ENCODE measurements at regions of chr14 and their contacts with region 1.

Region 1: GRCh38 chr14:63543000-63543825 is at the start of gene PPP2R5E:
- DNase-seq: peak; percentile 97
- H3K4me3 ChIP-seq: peak within 1 kb of the TSS; percentile 89
- H3K27ac ChIP-seq: peak within 1 kb of the TSS; percentile 77
- H3K27me3 ChIP-seq: no peaks in the 10 kb centered on the region
- CTCF ChIP-seq: no peak
- polyA plus RNA-seq, gene PPP2R5E: 18.2 and 20.3 TPM in 2 replicates

Region 2: GRCh38 chr14:63483315-63483714 is 59.9 kb before region 1 on chr14:
- CTCF ChIA-PET with region 1: no interaction called
- POLR2A ChIA-PET with region 1: no interaction called
- DNase-seq: no peak
- H3K4me3 ChIP-seq: no peak overlapping the region
- H3K27ac ChIP-seq: no peak overlapping the region
- H3K27me3 ChIP-seq: no peaks in the 10 kb centered on the region
- CTCF ChIP-seq: no peak

Region 3: GRCh38 chr14:63510538-63510937 is 32.7 kb before region 1 on chr14:
- CTCF ChIA-PET with region 1: no interaction called
- POLR2A ChIA-PET with region 1: interaction called, 13 read pairs
- DNase-seq: peak; percentile 21
- H3K4me3 ChIP-seq: no peak overlapping the region
- H3K27ac ChIP-seq: no peak overlapping the region
- H3K27me3 ChIP-seq: no peaks in the 10 kb centered on the region
- CTCF ChIP-seq: no peak

Region 4: DNA sequence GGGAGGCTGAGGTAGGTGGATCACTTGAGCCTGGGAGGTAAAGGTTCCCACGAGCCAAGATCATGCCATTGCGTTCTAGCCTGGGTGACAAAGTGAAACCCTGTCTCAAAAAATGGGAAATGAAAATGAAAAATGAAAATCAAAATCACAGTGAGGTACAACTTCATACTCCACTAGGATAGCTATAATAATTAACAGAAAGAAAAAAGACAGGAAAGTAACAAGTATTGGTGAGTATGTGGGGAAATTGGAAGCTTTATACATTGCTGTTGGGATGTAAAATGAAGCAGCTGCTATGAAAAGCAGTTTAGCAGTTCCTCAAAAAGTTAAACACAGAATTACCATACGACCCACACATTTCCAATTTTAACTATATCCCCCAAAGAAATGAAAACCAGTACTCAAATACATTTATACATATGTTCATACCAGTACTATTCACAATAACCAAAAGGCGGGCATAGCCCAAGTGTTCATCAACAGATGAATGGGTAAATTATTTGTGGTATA is 162.4 kb after region 1 on chr14:
- CTCF ChIA-PET with region 1: no interaction called
- POLR2A ChIA-PET with region 1: no interaction called
- DNase-seq: no peak
- H3K4me3 ChIP-seq: no peak overlapping the region
- H3K27ac ChIP-seq: no peak overlapping the region
- H3K27me3 ChIP-seq: no peaks in the 10 kb centered on the region
- CTCF ChIP-seq: no peak